ENCODE measurements at regions of chr2 and their contacts with region 1.

Region 1: DNA sequence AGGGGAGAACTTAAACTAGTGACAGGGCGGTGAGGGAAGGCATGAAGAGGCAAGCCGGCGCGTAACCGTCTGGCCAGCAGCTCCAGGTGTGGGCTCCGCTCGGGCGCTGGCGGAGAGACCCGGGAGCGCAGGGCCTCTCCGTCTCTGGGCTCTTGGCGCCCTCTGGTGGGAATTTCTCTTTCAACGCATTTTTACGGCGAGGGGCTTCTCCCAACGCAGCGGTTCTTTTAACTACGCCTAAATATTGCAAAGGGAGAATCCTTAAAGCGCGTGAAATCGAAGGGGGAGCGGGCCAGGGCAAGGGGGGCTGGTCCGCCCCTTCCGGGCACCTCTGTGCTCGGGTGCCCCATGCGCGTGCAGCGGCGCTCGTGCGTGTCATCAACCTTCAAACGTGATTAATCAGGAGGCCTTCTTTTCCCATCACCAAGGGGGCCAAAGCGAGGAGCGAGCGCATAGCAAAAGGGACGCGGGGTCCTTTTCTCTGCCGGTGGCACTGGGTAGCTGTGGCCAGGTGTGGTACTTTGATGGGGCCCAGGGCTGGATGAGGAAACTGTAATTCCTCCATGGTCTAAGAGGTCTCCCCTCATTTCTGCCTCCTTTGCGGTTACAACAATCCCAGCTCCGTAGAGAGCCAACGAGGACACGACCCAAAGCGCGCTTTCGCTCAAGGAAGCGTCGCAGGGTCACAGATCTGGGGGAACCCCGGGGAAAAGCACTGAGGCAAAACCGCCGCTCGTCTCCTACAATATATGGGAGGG is 762 bp upstream of the GAD1 start:
- DNase-seq: peak; percentile 76

Region 2: DNA sequence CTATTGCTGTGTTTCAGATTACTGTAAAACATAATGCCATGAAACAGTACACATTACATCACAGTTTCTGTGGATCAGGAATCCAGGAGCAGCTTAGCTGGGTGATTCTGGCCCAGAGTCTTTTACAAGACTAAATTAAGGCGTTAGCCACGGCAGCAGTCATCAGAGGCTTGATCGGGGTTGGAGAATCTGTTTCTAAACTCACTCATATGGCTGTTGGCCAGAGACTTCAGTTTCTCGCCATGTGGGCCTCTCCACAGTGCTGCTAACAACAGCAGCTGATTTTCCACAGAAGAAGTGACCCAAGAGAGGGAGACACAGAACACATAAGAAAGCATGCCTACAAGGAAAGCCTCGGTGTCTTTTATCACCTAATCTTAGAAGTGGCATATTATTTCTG is 727.1 kb before region 1 on chr2:
- in situ Hi-C with region 1: no loop called
- DNase-seq: no peak

Region 3: DNA sequence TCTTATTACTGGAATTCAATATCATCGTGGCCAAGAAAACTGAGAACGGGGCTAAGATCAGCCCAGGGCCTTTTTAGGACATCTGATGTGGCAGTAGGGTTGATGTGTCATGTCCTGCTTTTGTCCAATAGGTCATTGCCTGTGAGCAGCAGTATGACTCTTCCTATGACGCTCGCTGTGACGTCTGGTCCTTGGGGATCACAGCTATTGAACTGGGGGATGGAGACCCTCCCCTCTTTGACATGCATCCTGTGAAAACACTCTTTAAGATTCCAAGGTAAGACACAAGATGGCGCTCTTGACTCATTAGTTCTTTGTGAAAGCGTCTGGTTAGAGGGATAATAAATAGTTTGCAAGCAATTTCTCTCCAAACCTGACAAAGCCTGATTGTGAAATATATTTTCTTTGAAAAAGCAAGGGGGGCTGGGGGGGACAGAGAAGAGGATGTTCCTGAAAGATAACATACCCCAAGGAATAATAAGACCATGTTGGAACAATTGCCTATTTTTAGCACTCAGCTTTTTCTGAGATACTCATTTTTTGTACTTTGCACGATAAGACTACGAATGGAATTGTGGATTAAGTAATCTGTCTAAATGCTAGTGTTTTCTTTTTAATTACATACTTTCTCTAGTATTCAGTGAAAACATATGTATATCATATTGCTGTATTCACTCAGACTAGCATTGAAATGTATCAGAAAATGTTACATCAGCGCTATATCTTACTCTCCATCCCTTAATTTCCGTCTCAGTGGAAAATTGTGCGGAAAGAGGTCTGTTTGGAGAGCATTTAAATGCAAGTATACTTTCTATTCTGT is 579.9 kb before region 1 on chr2:
- in situ Hi-C with region 1: loop called (anchors 25 kb)
- DNase-seq: peak; percentile 71

Region 4: GRCh38 chr2:170409164-170409535 is 406.8 kb before region 1 on chr2:
- in situ Hi-C with region 1: loop called (anchors 25 kb)
- DNase-seq: peak; percentile 73

Measured in KBM-7 (cell line).